Right ventricle myocardium inferior (tissue), 1 donor: ENCODE measurements at regions of chr9 and their contacts with region 1.

Region 1: DNA sequence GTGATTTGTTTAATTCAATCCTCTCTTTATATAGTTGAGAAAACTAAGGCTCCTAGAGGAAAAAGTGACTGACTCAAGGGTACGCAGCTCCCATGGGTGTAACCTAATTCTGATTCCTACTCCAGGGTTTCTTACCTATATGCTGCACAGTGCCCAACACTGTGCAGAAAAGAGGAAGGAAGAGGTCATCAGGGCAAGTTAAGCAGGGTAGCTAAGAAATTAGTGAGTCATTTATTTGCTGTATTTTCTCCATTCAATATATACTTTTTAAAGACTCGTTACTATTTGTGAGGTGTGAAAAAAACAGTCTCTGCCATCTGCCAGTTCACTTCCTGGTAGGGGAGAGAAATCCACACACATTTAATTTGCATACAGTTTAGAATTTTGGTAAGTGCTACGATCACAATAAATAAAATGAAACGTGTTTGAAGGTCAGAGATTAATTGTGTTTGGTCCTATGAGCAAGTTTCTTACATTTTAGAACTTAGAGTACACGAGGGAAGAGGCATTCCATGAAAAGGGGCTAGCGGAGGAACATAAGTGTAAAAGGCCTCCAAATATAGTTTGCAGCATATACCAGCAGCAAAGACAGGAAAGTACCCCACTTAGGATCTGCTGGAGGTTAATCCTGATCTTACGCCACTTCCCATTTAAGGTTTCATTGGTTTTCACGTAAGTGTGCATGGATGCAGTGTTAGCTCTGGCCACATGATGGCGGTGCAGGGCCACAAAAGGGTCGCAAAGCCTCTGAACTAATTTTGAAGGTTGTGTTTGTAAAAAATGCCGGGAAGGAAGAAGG is 59.9 kb upstream of the TLR4 start:
- DNase-seq: peak; percentile 81
- ATAC-seq: peak; percentile 72

Region 2: GRCh38 chr9:117782931-117783788 is 138.8 kb after region 1 on chr9:
- intact Hi-C with region 1: loop called (anchors 2 kb)
- DNase-seq: peak; percentile 75
- ATAC-seq: peak; percentile 90